Heart right ventricle (tissue), 16 donors: ENCODE measurements at regions of chr2 and their contacts with region 1.

Region 1: GRCh38 chr2:20962939-20963557 is 80.8 kb downstream of the APOB start:
- DNase-seq: peak; percentile 57 to 61
- ATAC-seq: peak; percentile 58 to 80 (median 66)
- H3K4me3 ChIP-seq: no peak overlapping the region
- H3K27ac ChIP-seq: no peak overlapping the region
- H3K4me1 ChIP-seq: no peaks in the 10 kb centered on the region
- H3K27me3 ChIP-seq: peaks cover 0 to 75% (median 40%) of the 10 kb centered on the region in 7 donors
- CTCF ChIP-seq: peak; percentile 75 to 94 (median 88)

Region 2: GRCh38 chr2:20682167-20682920 is 280.7 kb before region 1 on chr2:
- intact Hi-C with region 1: loop called in 3 of 10 experiments (anchors 5 kb)
- DNase-seq: no peak
- ATAC-seq: peak in 1 of 8 donors; percentile 42
- H3K4me3 ChIP-seq: no peak overlapping the region
- H3K27ac ChIP-seq: no peak overlapping the region
- H3K4me1 ChIP-seq: peaks cover 0 to 6% (median 0%) of the 10 kb centered on the region in 9 donors
- H3K27me3 ChIP-seq: no peaks in the 10 kb centered on the region
- CTCF ChIP-seq: peak in 7 of 9 donors; percentile 18 to 49 (median 42)

Region 3: DNA sequence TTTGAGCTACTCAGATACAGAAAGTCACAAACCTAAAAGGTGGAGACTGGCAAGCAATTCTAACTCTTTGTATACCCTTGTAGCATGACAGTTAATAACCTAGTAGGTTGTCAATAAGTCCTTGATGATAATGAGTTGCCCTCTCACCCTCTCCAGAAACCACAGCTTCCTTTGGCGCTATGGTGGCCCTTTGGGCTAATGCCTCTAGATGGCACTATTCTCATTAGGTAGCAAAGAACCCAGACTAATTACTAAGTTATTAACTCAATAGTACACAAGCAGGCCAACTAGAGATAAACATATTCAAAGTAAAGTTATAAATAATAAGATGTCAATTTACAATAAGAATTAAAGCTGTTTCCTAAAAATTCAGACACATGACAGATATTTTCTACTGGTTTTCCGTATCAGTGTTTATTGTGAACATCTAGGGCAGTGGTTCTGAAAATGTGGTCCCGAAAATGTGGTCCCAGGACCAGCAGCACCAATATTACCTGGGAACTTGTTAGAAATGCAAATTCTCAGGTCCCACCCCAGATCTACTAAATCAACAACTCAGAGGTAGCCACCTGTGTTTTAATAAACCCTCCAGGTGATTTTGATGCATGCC is 181.3 kb before region 1 on chr2:
- intact Hi-C with region 1: loop called in 7 of 10 experiments (anchors 2 to 10 kb)
- DNase-seq: no peak
- ATAC-seq: no peak
- H3K4me3 ChIP-seq: no peak overlapping the region
- H3K27ac ChIP-seq: no peak overlapping the region
- H3K4me1 ChIP-seq: no peaks in the 10 kb centered on the region
- H3K27me3 ChIP-seq: no peaks in the 10 kb centered on the region
- CTCF ChIP-seq: peak in 8 of 9 donors; percentile 25 to 62 (median 52)